HCT116 (cell line): ENCODE measurements at regions of chr10 and their contacts with region 1.

Region 1: GRCh38 chr10:92627845-92628480 is 35.0 kb downstream of the KIF11 start:
- DNase-seq: no peak
- ATAC-seq: peak; percentile 34; the same call in 1 of the 2 replicates
- H3K4me3 ChIP-seq: no peak overlapping the region
- H3K27ac ChIP-seq: no peak overlapping the region
- H3K4me1 ChIP-seq: no peaks in the 10 kb centered on the region
- H3K27me3 ChIP-seq: no peaks in the 10 kb centered on the region
- CTCF ChIP-seq: peak in 1 of 3 experiments; percentile 32; a peak in 1 of 6 replicates
- POLR2A ChIP-seq: no peak
- RAD21 ChIP-seq: no peak

Region 2: GRCh38 chr10:92640110-92640509 is 12.1 kb after region 1 on chr10:
- CTCF ChIA-PET with region 1: no interaction called
- POLR2A ChIA-PET with region 1: no interaction called
- RAD21 ChIA-PET with region 1: no interaction called
- intact Hi-C with region 1: loop called (anchors 1 kb)
- DNase-seq: peak; percentile 8
- ATAC-seq: no peak
- H3K4me3 ChIP-seq: no peak overlapping the region
- H3K27ac ChIP-seq: no peak overlapping the region
- H3K4me1 ChIP-seq: peaks cover 6 to 26% of the 10 kb centered on the region in 2 experiments; a peak in 3 of 4 replicates
- H3K27me3 ChIP-seq: no peaks in the 10 kb centered on the region
- CTCF ChIP-seq: no peak
- POLR2A ChIP-seq: no peak
- RAD21 ChIP-seq: no peak